Activated T-helper 2 cell treated with anti-CD3 and anti-CD28 coated beads, Interferon-gamma antibody, Interleukin-2, Interleukin-4, amounts not matched to agents 10 μg/mL and 5 μg/mL and 100 μg/mL, durations not matched to agents 14 hours and 24 hours and 36 hours (primary cell): ENCODE measurements at regions of chr4 and their contacts with region 1.

Region 1: DNA sequence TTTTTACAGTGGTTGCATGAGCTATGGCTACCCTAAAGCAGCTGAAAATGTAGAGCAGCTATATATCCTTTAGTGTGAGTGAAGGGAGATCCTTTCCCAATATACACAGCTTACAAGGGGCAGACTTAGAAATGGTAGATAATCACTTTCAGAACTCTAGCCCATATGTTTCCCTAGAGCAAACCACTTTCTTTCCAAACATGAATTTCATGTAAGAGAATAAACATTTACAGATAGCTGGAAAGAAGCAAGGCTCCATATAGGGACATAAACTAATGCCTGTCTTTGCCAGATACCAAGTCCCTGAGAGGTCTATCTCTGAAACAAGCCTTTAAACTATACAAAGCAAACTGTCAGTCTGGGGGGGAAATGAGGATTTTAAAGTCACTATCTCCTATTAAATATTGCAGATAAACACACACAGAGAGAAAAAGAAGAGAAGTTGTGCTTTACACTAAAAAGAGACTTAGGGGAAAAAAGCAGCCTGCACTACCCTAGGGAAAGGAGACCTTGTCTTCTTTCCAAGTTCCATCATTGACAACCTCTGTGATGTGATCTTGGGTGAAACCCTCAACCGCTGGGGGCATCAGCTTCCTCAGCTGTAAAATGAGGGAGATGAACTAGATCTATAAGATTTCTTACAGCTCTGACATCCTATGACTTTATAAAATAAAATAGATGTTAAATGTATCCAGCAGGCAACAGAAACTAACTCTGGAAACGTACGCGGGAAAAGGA is 73.6 kb downstream of the TMEM156 start:
- DNase-seq: no peak
- H3K4me3 Mint-ChIP-seq: no peak overlapping the region
- H3K27ac Mint-ChIP-seq: peak overlapping the region; percentile 94
- H3K4me1 Mint-ChIP-seq: peaks cover 35% of the 10 kb centered on the region
- H3K27me3 Mint-ChIP-seq: no peaks in the 10 kb centered on the region

Region 2: GRCh38 chr4:38914854-38915253 is 43.8 kb before region 1 on chr4:
- intact Hi-C with region 1: no loop called
- DNase-seq: no peak
- H3K4me3 Mint-ChIP-seq: peak overlapping the region; percentile 47
- H3K27ac Mint-ChIP-seq: peak overlapping the region; percentile 78
- H3K4me1 Mint-ChIP-seq: peaks cover 12% of the 10 kb centered on the region
- H3K27me3 Mint-ChIP-seq: no peaks in the 10 kb centered on the region

Region 3: GRCh38 chr4:38980903-38981676 is 22.5 kb after region 1 on chr4:
- intact Hi-C with region 1: loop called (anchors 1 kb)
- DNase-seq: no peak
- H3K4me3 Mint-ChIP-seq: peak overlapping the region; percentile 31
- H3K27ac Mint-ChIP-seq: peak overlapping the region; percentile 81
- H3K4me1 Mint-ChIP-seq: peaks cover 53% of the 10 kb centered on the region
- H3K27me3 Mint-ChIP-seq: no peaks in the 10 kb centered on the region

Region 4: DNA sequence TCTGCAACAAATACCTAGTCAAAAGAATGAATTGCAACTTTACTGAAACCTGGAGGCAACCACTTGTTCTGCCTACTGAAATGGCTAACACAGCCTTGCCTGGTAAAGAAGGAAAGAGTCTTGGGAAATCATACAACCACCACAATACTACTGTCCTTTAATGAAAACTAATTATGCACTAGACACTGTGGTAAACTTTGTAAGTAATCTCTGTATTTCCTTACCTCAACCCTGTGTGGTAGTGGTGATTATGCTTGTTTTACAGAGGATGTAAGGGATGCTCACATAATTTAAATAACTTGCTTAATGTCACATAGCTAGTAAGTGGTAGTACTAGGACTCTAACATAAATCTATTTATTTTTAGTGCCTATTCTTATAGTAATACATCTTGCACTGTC is 28.9 kb after region 1 on chr4:
- intact Hi-C with region 1: loop called (anchors 1 kb)
- DNase-seq: no peak
- H3K4me3 Mint-ChIP-seq: no peak overlapping the region
- H3K27ac Mint-ChIP-seq: peak overlapping the region; percentile 47
- H3K4me1 Mint-ChIP-seq: peaks cover 53% of the 10 kb centered on the region
- H3K27me3 Mint-ChIP-seq: no peaks in the 10 kb centered on the region

Region 5: DNA sequence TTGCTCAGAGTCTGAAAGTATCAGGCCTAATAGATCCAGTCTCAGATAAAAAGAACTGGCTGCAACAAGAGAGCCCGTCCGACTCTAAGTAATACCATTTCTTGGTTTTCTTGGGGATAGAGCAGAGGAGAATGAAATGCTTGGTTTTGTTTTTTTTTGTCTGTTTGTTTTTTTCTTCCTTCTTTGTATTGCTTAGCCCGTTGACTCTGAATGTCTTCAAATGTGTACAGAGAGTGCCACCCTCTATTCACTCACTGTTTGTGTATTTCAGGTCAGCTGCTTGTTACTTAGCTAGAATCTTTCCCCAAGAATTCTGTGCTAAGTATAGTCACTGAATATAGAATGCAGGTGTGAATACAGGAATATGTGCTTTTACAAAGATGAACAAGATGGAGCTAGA is 79.3 kb after region 1 on chr4:
- intact Hi-C with region 1: no loop called
- DNase-seq: no peak
- H3K4me3 Mint-ChIP-seq: no peak overlapping the region
- H3K27ac Mint-ChIP-seq: peak overlapping the region; percentile 26
- H3K4me1 Mint-ChIP-seq: peaks cover 38% of the 10 kb centered on the region
- H3K27me3 Mint-ChIP-seq: no peaks in the 10 kb centered on the region